ENCODE measurements at regions of chr12 and their contacts with region 1.

Region 1: GRCh38 chr12:7460375-7461259 is 16.7 kb upstream of the CD163L1 start:
- DNase-seq: peak; percentile 69
- H3K4me3 Mint-ChIP-seq: no peak overlapping the region
- H3K27ac Mint-ChIP-seq: no peak overlapping the region
- H3K4me1 Mint-ChIP-seq: peaks cover 5% of the 10 kb centered on the region
- H3K27me3 Mint-ChIP-seq: peaks cover 5% of the 10 kb centered on the region
- CTCF ChIP-seq: peak; percentile 95

Region 2: GRCh38 chr12:7142056-7142644 is 318.5 kb before region 1 on chr12:
- CTCF ChIA-PET with region 1: interaction called, 3 read pairs
- POLR2A ChIA-PET with region 1: no interaction called
- intact Hi-C with region 1: loop called (anchors 5 kb)
- DNase-seq: peak; percentile 70
- H3K4me3 Mint-ChIP-seq: no peak overlapping the region
- H3K27ac Mint-ChIP-seq: no peak overlapping the region
- H3K4me1 Mint-ChIP-seq: no peaks in the 10 kb centered on the region
- H3K27me3 Mint-ChIP-seq: no peaks in the 10 kb centered on the region
- CTCF ChIP-seq: peak; percentile 45

Region 3: GRCh38 chr12:7219599-7220243 is 240.9 kb before region 1 on chr12:
- CTCF ChIA-PET with region 1: interaction called, 135 read pairs
- POLR2A ChIA-PET with region 1: no interaction called
- intact Hi-C with region 1: loop called (anchors 1 kb)
- DNase-seq: peak; percentile 80
- H3K4me3 Mint-ChIP-seq: no peak overlapping the region
- H3K27ac Mint-ChIP-seq: no peak overlapping the region
- H3K4me1 Mint-ChIP-seq: no peaks in the 10 kb centered on the region
- H3K27me3 Mint-ChIP-seq: peaks cover 23% of the 10 kb centered on the region
- CTCF ChIP-seq: peak; percentile 84

Region 4: DNA sequence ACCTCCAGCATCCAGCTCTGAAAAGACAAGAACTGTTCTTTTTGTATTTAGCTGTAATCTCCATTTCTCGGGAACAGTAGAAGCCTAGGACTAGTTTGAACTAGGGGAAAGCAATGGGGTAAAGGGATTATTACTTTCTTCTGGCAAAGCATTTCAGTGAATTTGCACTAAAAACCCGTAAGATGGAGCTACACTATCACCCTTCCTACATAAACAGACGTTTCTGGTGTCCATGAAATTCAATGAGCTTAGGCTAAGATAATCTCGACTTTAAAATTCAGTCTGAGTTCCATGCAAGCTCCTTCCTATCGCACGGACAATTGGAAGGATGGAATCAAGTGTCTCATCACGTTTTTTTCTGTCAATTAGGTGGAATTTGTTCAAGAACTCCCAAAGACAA is 132.7 kb before region 1 on chr12:
- CTCF ChIA-PET with region 1: interaction called, 17 read pairs
- POLR2A ChIA-PET with region 1: no interaction called
- intact Hi-C with region 1: loop called (anchors 1 kb)
- DNase-seq: no peak
- H3K4me3 Mint-ChIP-seq: no peak overlapping the region
- H3K27ac Mint-ChIP-seq: no peak overlapping the region
- H3K4me1 Mint-ChIP-seq: no peaks in the 10 kb centered on the region
- H3K27me3 Mint-ChIP-seq: peaks cover 43% of the 10 kb centered on the region
- CTCF ChIP-seq: no peak

Region 5: DNA sequence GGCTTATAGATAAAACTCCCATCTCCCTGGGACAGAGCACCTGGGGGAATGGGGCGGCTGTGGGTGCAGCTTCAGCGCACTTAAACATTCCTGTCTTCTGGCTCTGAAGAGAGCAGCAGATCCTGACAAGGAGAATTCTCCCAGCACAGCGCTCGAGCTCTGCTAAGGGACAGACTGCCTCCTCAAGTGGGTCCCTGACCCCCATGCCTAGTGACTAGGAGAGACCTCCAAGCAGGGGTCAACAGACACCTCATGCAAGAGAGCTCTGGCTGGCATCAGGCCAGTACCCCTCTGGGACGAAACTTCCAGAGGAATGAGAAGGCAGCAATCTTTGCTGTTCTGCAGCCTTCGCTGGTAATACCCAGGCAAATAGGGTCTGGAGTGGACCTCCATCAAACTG is 11.4 kb after region 1 on chr12:
- CTCF ChIA-PET with region 1: interaction called, 19 read pairs
- POLR2A ChIA-PET with region 1: interaction called, 4 read pairs
- intact Hi-C with region 1: no loop called
- DNase-seq: no peak
- H3K4me3 Mint-ChIP-seq: no peak overlapping the region
- H3K27ac Mint-ChIP-seq: no peak overlapping the region
- H3K4me1 Mint-ChIP-seq: no peaks in the 10 kb centered on the region
- H3K27me3 Mint-ChIP-seq: peaks cover 39% of the 10 kb centered on the region
- CTCF ChIP-seq: no peak

Measured in MCF 10A (cell line).